Activated naive CD4-positive, alpha-beta T cell treated with anti-CD3 and anti-CD28 coated beads for 36 hours (primary cell): ENCODE measurements at regions of chr10 and their contacts with region 1.

Region 1: DNA sequence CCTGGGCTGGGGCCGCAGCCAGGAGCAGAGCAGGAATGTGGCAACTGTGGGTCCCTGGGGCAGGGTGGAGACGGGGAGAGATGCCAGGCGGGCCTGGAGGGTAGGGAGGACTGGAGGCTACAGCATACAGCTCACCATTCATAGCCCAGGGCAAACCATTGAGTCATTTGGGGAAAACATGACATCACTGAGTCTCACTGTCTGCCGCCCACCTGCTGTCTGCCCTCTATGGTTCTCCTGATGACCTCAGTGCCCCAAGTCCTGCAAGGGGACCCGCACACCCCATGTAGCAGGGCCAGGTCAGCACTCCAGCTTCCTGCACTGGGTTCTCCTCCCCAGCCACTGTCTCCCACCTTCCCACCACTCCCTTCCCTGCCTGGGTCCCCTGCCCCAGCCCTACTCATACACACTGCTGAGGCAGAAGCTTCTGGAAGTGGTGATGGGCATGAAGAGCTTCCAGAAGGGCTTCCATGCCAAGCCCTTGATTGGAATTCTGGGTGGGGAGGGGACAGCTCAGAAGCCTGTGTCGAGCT is 10.4 kb downstream of the CHST3 start:
- DNase-seq: peak; percentile 65
- H3K4me3 Mint-ChIP-seq: no peak overlapping the region
- H3K27ac Mint-ChIP-seq: peak overlapping the region; percentile 38
- H3K4me1 Mint-ChIP-seq: peaks cover 38% of the 10 kb centered on the region
- H3K27me3 Mint-ChIP-seq: no peaks in the 10 kb centered on the region

Region 2: GRCh38 chr10:71933651-71934050 is 40.9 kb before region 1 on chr10:
- CTCF ChIA-PET with region 1: no interaction called
- intact Hi-C with region 1: loop called (anchors 1 kb)
- DNase-seq: peak; percentile 87
- H3K4me3 Mint-ChIP-seq: no peak overlapping the region
- H3K27ac Mint-ChIP-seq: peak overlapping the region; percentile 69
- H3K4me1 Mint-ChIP-seq: peaks cover 36% of the 10 kb centered on the region
- H3K27me3 Mint-ChIP-seq: no peaks in the 10 kb centered on the region